ENCODE measurements at regions of chr17 and their contacts with region 1.

Region 1: GRCh38 chr17:19457830-19458271 is 46.8 kb downstream of the RNF112 start:
- DNase-seq: no peak
- ATAC-seq: no peak
- H3K4me3 ChIP-seq: no peak overlapping the region
- H3K27ac ChIP-seq: no peak overlapping the region
- H3K4me1 ChIP-seq: no peaks in the 10 kb centered on the region
- H3K27me3 ChIP-seq: no peaks in the 10 kb centered on the region; the same call in 1 of the 2 replicates
- CTCF ChIP-seq: no peak

Region 2: GRCh38 chr17:19250421-19251173 is 207.3 kb before region 1 on chr17:
- CTCF ChIA-PET with region 1: no interaction called
- POLR2A ChIA-PET with region 1: no interaction called
- in situ Hi-C with region 1: no loop called
- intact Hi-C with region 1: no loop called
- DNase-seq: no peak
- ATAC-seq: no peak
- H3K4me3 ChIP-seq: no peak overlapping the region
- H3K27ac ChIP-seq: no peak overlapping the region
- H3K4me1 ChIP-seq: peaks cover 3% of the 10 kb centered on the region
- H3K27me3 ChIP-seq: no peaks in the 10 kb centered on the region
- CTCF ChIP-seq: no peak

Region 3: GRCh38 chr17:19728079-19728495 is 270.2 kb after region 1 on chr17:
- CTCF ChIA-PET with region 1: no interaction called
- POLR2A ChIA-PET with region 1: no interaction called
- in situ Hi-C with region 1: no loop called
- intact Hi-C with region 1: no loop called
- DNase-seq: no peak
- ATAC-seq: peak; percentile 66; the same call in 1 of the 2 replicates
- H3K4me3 ChIP-seq: no peak overlapping the region
- H3K27ac ChIP-seq: no peak overlapping the region
- H3K4me1 ChIP-seq: no peaks in the 10 kb centered on the region; the same call in 1 of the 2 replicates
- H3K27me3 ChIP-seq: no peaks in the 10 kb centered on the region
- CTCF ChIP-seq: no peak

Region 4: DNA sequence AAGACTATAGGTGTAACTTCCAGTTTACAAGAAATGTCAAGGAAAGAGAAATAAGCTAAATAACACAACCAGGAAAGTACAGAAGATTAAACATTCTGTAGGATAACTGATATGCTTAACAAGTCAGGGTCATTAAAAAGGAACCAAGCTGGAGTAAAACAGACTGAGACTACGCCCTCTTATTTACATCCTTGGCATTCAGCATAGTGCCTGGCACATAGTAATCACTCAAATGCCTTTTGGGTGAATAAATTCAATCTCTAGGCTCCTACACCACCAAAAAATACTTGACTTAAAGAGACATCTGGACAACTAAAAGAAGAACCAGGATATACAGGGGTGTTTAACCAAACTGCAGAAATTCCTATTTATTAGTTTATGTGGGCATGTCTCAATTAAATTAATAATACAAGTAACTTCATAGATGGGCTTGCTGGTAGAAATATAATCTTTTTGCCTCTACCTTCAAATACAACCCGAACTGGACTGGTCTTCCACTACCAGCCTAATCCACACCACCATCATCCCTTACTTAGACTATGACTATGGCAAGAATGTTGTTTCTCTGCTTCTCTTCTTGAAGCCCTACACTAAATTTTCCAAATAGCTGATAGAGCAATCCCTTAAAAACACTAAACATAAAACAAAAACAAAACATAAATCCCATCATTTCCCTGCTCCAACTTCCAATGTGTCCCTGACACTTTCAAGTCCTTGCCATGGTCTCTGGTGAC is 457.6 kb after region 1 on chr17:
- CTCF ChIA-PET with region 1: no interaction called
- POLR2A ChIA-PET with region 1: interaction called, 14 read pairs
- in situ Hi-C with region 1: no loop called
- intact Hi-C with region 1: no loop called
- DNase-seq: no peak
- ATAC-seq: no peak
- H3K4me3 ChIP-seq: no peak overlapping the region
- H3K27ac ChIP-seq: no peak overlapping the region
- H3K4me1 ChIP-seq: no peaks in the 10 kb centered on the region
- H3K27me3 ChIP-seq: no peaks in the 10 kb centered on the region
- CTCF ChIP-seq: no peak

Region 5: GRCh38 chr17:19992803-19993713 is 535.2 kb after region 1 on chr17:
- CTCF ChIA-PET with region 1: no interaction called
- POLR2A ChIA-PET with region 1: no interaction called
- in situ Hi-C with region 1: no loop called
- intact Hi-C with region 1: no loop called
- DNase-seq: peak; percentile 86
- ATAC-seq: peak; percentile 98
- H3K4me3 ChIP-seq: peak overlapping the region; percentile 21 to 54
- H3K27ac ChIP-seq: peak overlapping the region; percentile 55; the same call in 1 of the 2 replicates
- H3K4me1 ChIP-seq: no peaks in the 10 kb centered on the region; the same call in 1 of the 2 replicates
- H3K27me3 ChIP-seq: no peaks in the 10 kb centered on the region
- CTCF ChIP-seq: peak; percentile 78; the same call in 1 of the 2 replicates